Heart right ventricle (tissue), 16 donors: ENCODE measurements at regions of chr6 and their contacts with region 1.

Region 1: GRCh38 chr6:105179244-105180065 is at the start of gene POPDC3:
- DNase-seq: peak; percentile 19 to 25
- ATAC-seq: peak; percentile 71 to 86 (median 80)
- H3K4me3 ChIP-seq: peak within 1 kb of the TSS; percentile 21 to 64 (median 56)
- H3K27ac ChIP-seq: peak within 1 kb of the TSS; percentile 80 to 94 (median 92)
- H3K4me1 ChIP-seq: peaks cover 0 to 9% (median 4%) of the 10 kb centered on the region in 9 donors
- H3K27me3 ChIP-seq: peaks cover 0 to 90% (median 23%) of the 10 kb centered on the region in 7 donors
- CTCF ChIP-seq: peak in 1 of 9 donors; percentile 2
- total RNA-seq, gene POPDC3: 31.1 to 59.7 (median 39.0) TPM

Region 2: DNA sequence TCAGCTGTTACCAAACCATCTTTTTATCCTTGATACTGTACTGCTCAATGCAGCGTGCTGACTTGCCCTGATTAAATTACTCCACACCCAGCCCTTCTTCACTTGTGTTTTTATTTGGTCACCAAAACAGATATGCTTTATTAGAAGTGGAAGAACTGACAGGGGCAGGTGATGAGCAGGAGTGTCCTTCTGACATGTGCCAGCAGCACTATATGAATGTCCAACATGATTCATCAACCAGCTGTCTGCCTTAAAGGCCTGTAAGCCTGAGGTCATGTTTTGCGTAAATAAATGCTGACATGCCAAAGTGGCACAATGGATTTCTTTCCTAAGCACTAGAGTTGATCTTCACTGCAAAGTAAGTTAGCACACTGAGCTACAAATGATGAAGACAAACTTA is 15.0 kb before region 1 on chr6:
- intact Hi-C with region 1: loop called in 1 of 10 experiments (anchors 1 kb)
- DNase-seq: peak in 1 of 2 donors; percentile 7
- ATAC-seq: peak in 7 of 8 donors; percentile 66 to 97 (median 94)
- H3K4me3 ChIP-seq: no peak overlapping the region
- H3K27ac ChIP-seq: peak overlapping the region in 5 of 10 donors; percentile 10 to 63 (median 54)
- H3K4me1 ChIP-seq: peaks cover 0 to 21% (median 6%) of the 10 kb centered on the region in 9 donors
- H3K27me3 ChIP-seq: no peaks in the 10 kb centered on the region
- CTCF ChIP-seq: no peak

Region 3: DNA sequence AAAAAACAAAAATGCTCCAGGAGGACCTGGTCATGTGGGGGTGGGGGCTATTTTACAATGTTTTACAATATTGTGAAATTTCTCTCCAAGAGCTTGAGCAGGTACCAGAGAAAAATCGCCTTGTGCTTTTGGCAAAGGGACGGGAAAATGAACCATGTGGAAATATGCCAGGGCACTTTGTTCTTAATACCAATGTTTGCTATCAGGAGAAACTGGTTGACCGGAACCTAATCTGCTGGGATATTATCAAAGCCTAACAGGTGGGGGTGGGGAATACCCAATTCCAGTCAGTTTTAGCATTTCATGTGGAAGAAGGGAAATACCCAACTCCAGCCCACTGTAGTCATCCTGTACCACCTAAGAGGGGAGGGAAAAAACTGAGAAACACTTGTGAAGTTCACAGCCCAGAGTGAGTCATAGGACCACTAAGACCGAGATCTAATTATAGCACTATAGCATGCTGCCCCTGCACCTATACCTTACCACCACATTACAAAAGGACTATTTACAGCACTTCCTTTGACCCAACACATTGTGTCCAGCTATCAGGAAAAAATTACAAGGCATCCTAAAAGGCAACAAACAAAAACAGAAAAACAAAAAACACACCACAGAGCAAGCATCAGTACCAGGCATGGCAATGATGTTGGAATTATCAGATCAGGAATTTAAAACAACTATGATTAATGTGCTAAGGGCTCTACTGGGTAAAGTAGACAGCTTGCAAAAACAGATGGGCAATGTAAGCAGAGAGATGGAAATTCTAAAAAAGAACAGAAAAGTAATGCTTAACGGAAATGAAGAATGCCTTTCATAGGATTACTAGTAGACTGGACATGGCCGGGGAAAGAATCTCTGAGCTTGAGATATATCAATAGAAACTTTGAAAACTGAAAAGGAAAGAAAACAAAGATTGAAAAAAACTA is 84.5 kb after region 1 on chr6:
- intact Hi-C with region 1: loop called in 2 of 10 experiments (anchors 5 to 10 kb)
- DNase-seq: no peak
- ATAC-seq: no peak
- H3K4me3 ChIP-seq: no peak overlapping the region
- H3K27ac ChIP-seq: no peak overlapping the region
- H3K4me1 ChIP-seq: peaks cover 0 to 11% (median 0%) of the 10 kb centered on the region in 9 donors
- H3K27me3 ChIP-seq: no peaks in the 10 kb centered on the region
- CTCF ChIP-seq: no peak